Heart left ventricle (tissue), 16 donors: ENCODE measurements at regions of chr5 and their contacts with region 1.

Region 1: DNA sequence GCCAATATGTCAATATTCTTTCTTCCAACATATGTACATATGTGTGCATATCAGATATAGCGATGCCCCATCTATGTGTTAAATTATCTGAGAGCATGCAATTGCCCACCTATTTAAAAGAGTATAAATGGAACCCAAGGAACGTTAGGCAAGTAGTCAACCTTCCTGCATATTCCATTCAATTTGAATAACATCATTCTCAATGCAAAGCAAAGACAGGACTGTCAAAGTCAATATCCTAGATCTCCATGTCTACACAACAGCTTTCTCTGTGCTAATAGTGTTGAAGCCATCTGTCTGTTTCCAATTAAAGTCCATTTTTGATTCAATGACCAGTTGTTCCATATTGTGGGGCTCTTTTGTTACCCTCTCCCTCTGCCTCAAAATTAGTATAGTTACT is 85.3 kb upstream of the COX7C start:
- DNase-seq: no peak
- ATAC-seq: no peak
- H3K4me3 ChIP-seq: no peak overlapping the region
- H3K27ac ChIP-seq: no peak overlapping the region
- H3K4me1 ChIP-seq: no peaks in the 10 kb centered on the region
- H3K27me3 ChIP-seq: peaks cover 0 to 3% (median 0%) of the 10 kb centered on the region in 9 donors
- CTCF ChIP-seq: no peak
- POLR2A ChIP-seq: no peak

Region 2: DNA sequence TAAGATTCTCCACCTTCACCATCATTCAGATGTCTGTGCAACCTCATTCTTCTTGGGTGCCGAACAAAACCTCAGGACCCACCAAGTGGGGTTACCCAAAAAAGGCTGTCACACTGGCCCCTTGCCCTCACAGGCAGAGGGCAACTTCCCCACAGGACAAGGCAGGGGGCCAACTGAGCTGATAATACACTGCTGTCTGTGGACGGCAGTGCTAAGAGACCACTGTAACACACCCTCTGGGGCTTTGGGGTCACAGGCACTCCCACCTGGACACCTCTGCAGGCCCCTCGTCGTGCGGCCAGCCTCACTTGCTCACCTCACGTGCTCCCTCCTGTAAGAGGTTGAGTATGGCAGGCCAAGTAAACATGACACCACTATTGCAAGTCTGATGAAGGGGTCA is 430.5 kb before region 1 on chr5:
- intact Hi-C with region 1: no loop called
- DNase-seq: no peak
- ATAC-seq: no peak
- H3K4me3 ChIP-seq: no peak overlapping the region
- H3K27ac ChIP-seq: no peak overlapping the region
- H3K4me1 ChIP-seq: no peaks in the 10 kb centered on the region
- H3K27me3 ChIP-seq: no peaks in the 10 kb centered on the region
- CTCF ChIP-seq: no peak
- POLR2A ChIP-seq: no peak

Region 3: GRCh38 chr5:86542532-86542931 is 10.1 kb after region 1 on chr5:
- intact Hi-C with region 1: loop called in 1 of 10 experiments (anchors 1 kb)
- DNase-seq: no peak
- ATAC-seq: no peak
- H3K4me3 ChIP-seq: no peak overlapping the region
- H3K27ac ChIP-seq: no peak overlapping the region
- H3K4me1 ChIP-seq: no peaks in the 10 kb centered on the region
- H3K27me3 ChIP-seq: no peaks in the 10 kb centered on the region
- CTCF ChIP-seq: no peak
- POLR2A ChIP-seq: no peak